Activated CD4-positive, alpha-beta T cell treated with anti-CD3 and anti-CD28 coated beads, Interleukin-2, amount 10 ng/mL, durations not matched to agents 7 days and 5 days (primary cell): ENCODE measurements at regions of chr14 and their contacts with region 1.

Region 1: DNA sequence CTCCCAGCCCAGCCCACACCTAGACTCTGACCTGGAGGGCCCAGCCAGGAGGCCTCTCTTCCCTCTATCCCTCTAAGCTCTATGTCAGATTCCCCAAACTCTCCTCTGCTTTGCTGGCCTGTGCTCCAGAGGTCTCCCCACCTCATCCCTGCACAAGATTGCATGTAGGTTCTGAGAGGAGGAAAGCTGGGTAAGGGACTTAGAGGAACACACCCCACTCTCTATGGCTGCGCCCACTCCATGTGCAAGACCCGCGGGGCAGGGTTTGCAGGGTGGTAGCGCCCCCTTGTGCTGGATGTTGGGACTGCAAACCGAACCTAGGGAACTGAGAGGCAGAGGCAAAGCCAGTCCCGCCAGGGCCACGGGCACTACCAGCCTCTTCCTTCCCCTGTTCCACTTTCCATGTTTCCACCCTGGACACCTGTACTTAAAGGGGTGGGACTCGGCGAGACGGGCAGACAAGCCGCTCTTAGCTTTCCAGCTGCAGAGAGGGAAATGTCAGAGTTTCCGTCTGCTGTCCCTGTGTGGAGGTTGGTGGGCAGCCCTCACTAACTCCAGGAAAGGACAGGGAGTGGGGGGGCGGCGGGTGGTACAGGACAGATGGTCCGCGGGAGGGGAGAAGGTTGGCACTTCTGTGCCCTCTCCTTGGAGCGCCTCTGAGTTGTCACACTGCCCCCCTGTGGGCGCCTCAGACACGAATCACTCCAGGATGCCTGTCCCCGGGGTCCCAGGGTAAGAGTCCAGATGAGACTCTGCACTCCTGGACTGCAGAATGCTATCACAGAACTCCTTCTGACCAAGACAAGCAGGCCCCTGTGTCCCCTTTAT is 16.8 kb downstream of the MMP14 start:
- DNase-seq: peak; percentile 87
- H3K4me3 Mint-ChIP-seq: peak overlapping the region; percentile 72
- H3K27ac Mint-ChIP-seq: peak overlapping the region; percentile 66
- H3K4me1 Mint-ChIP-seq: peaks cover 37% of the 10 kb centered on the region
- H3K27me3 Mint-ChIP-seq: peaks cover 28% of the 10 kb centered on the region

Region 2: DNA sequence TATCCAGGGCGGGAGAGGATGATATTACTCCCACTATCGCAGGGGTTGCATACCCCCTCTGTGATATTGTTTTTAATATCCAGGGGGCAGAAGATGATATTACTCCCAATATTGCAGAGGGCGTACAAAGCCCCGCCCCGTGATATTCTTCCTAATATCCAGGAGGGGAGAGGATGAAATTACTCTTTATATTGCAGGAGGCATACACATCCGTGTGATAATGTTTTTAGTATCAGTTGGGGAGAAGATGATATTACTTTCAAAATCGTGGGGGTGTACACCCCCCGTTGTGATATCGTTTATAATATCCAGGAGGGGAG is 139.6 kb before region 1 on chr14:
- CTCF ChIA-PET with region 1: no interaction called
- POLR2A ChIA-PET with region 1: no interaction called
- DNase-seq: no peak
- H3K4me3 Mint-ChIP-seq: peak overlapping the region; percentile 80
- H3K27ac Mint-ChIP-seq: peak overlapping the region; percentile 86
- H3K4me1 Mint-ChIP-seq: peaks cover 20% of the 10 kb centered on the region
- H3K27me3 Mint-ChIP-seq: peaks cover 18% of the 10 kb centered on the region

Region 3: DNA sequence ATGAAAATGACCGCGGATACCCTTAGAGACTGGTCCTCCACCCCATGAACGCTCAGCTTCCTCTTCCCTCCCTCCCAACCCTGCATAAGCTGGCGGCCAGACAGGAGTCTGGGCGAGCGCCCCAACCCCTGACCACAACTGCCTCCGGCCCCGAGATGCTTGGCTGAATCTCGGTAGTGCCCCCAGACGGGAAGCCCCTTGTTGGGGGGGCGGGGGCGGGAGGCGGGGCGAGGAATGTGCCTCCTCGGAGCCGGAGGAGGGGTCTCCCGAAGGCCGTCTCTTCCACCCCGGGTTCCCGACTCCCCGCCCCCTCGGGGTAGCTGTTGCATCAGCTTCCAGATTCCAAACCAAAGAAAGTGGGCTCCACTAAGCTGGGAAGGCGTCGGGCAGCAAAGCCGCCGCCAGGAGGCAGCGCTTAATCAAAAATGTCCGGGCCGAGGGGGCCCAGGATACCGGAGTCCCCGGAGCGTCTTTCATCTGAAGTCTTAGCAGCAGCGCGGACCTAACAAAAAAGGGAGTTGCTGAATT is 30.5 kb before region 1 on chr14:
- CTCF ChIA-PET with region 1: interaction called, 91 read pairs
- POLR2A ChIA-PET with region 1: interaction called, 3 read pairs
- DNase-seq: peak; percentile 60
- H3K4me3 Mint-ChIP-seq: peak overlapping the region; percentile 37
- H3K27ac Mint-ChIP-seq: no peak overlapping the region
- H3K4me1 Mint-ChIP-seq: peaks cover 35% of the 10 kb centered on the region
- H3K27me3 Mint-ChIP-seq: peaks cover 17% of the 10 kb centered on the region

Region 4: GRCh38 chr14:22829661-22830442 is 23.3 kb before region 1 on chr14 and contains the start of gene MRPL52:
- CTCF ChIA-PET with region 1: interaction called, 91 read pairs
- POLR2A ChIA-PET with region 1: no interaction called
- DNase-seq: peak; percentile 94
- H3K4me3 Mint-ChIP-seq: peak within 1 kb of the TSS; percentile 90
- H3K27ac Mint-ChIP-seq: peak within 1 kb of the TSS; percentile 90
- H3K4me1 Mint-ChIP-seq: peaks cover 35% of the 10 kb centered on the region
- H3K27me3 Mint-ChIP-seq: no peaks in the 10 kb centered on the region
- total RNA-seq, gene MRPL52: 101 to 112 TPM

Region 5: GRCh38 chr14:22836301-22837113 is 16.6 kb before region 1 on chr14 and contains the start of gene MMP14:
- CTCF ChIA-PET with region 1: interaction called, 56 read pairs
- POLR2A ChIA-PET with region 1: no interaction called
- DNase-seq: no peak
- H3K4me3 Mint-ChIP-seq: peak within 1 kb of the TSS; percentile 47
- H3K27ac Mint-ChIP-seq: no peak within 1 kb of the TSS
- H3K4me1 Mint-ChIP-seq: peaks cover 14% of the 10 kb centered on the region
- H3K27me3 Mint-ChIP-seq: peaks cover 28% of the 10 kb centered on the region
- total RNA-seq, gene MMP14: 1.8 to 2.1 TPM

Region 6: GRCh38 chr14:22865424-22866405 is 12.6 kb after region 1 on chr14:
- CTCF ChIA-PET with region 1: interaction called, 50 read pairs
- POLR2A ChIA-PET with region 1: interaction called, 3 read pairs
- DNase-seq: no peak
- H3K4me3 Mint-ChIP-seq: no peak overlapping the region
- H3K27ac Mint-ChIP-seq: no peak overlapping the region
- H3K4me1 Mint-ChIP-seq: peaks cover 9% of the 10 kb centered on the region
- H3K27me3 Mint-ChIP-seq: peaks cover 22% of the 10 kb centered on the region

Region 7: DNA sequence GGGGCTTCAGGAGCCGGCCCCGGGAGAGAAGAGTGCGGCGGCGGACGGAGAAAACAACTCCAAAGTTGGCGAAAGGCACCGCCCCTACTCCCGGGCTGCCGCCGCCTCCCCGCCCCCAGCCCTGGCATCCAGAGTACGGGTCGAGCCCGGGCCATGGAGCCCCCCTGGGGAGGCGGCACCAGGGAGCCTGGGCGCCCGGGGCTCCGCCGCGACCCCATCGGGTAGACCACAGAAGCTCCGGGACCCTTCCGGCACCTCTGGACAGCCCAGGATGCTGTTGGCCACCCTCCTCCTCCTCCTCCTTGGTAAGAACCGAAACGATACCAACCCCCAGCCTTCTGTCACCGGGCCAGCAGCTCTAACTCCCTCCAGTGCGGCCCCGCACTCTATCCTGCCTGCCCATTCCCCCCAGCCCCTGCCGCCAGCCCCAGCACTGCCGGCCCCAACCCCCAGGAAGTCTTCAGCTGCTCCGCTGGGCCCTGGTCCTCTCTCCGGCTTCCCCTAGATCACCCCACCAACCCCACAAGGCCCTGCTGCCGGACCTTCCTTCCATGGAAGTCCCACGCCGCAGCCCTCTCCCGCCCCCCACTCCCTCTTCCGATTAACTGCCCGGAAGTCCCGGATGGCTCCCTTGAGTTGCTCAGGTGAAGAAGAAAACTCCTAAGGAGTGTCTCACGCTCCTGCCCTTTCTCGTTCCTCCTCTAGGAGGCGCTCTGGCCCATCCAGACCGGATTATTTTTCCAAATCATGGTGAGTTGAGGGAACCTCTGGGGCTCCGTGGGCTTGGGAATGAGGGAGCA is 19.1 kb after region 1 on chr14:
- CTCF ChIA-PET with region 1: interaction called, 50 read pairs
- POLR2A ChIA-PET with region 1: no interaction called
- DNase-seq: peak; percentile 76
- H3K4me3 Mint-ChIP-seq: peak overlapping the region; percentile 89
- H3K27ac Mint-ChIP-seq: peak overlapping the region; percentile 99
- H3K4me1 Mint-ChIP-seq: peaks cover 26% of the 10 kb centered on the region
- H3K27me3 Mint-ChIP-seq: no peaks in the 10 kb centered on the region

Region 8: GRCh38 chr14:22886500-22887259 is 33.5 kb after region 1 on chr14:
- CTCF ChIA-PET with region 1: interaction called, 19 read pairs
- POLR2A ChIA-PET with region 1: no interaction called
- DNase-seq: peak; percentile 72
- H3K4me3 Mint-ChIP-seq: peak overlapping the region; percentile 77
- H3K27ac Mint-ChIP-seq: peak overlapping the region; percentile 85
- H3K4me1 Mint-ChIP-seq: peaks cover 48% of the 10 kb centered on the region
- H3K27me3 Mint-ChIP-seq: peaks cover 19% of the 10 kb centered on the region